Thyroid gland (tissue), 4 donors: ENCODE measurements at regions of chr17 and their contacts with region 1.

Region 1: GRCh38 chr17:74792586-74793105 is 16.5 kb upstream of the NAT9 start:
- DNase-seq: no peak
- H3K4me3 ChIP-seq: no peak overlapping the region
- H3K27ac ChIP-seq: no peak overlapping the region
- H3K4me1 ChIP-seq: peaks cover 19 to 42% of the 10 kb centered on the region in 2 donors
- H3K27me3 ChIP-seq: no peaks in the 10 kb centered on the region
- CTCF ChIP-seq: no peak
- POLR2A ChIP-seq: no peak

Region 2: DNA sequence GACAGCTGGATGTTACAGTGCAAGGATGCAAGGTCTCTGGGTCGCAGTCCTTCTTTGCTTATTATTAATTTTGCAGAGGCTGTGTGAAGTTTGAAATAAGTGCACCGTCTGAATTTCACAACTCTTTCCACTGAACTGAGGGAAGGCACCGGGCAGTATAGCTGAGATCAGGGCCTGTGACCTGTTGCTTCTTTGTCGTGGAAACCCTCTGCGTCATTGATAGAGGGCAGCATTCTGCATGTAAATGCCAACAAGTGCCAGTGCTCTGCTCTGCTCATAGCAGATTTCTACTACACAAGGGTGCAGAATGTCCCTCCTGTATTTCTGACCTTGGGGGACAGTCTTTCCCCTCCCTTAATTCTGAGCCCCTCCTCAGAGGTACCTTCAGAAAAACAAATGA is 105.9 kb before region 1 on chr17:
- intact Hi-C with region 1: no loop called
- DNase-seq: no peak
- H3K4me3 ChIP-seq: no peak overlapping the region
- H3K27ac ChIP-seq: no peak overlapping the region
- H3K4me1 ChIP-seq: no peaks in the 10 kb centered on the region
- H3K27me3 ChIP-seq: no peaks in the 10 kb centered on the region
- CTCF ChIP-seq: no peak
- POLR2A ChIP-seq: no peak

Region 3: GRCh38 chr17:74864866-74865395 is 72.3 kb after region 1 on chr17:
- intact Hi-C with region 1: loop called (anchors 2 kb)
- DNase-seq: peak; percentile 76 to 77
- H3K4me3 ChIP-seq: no peak overlapping the region
- H3K27ac ChIP-seq: no peak overlapping the region
- H3K4me1 ChIP-seq: peaks cover 16 to 23% of the 10 kb centered on the region in 2 donors
- H3K27me3 ChIP-seq: peaks cover 3% of the 10 kb centered on the region
- CTCF ChIP-seq: peak; percentile 85 to 98 (median 95)
- POLR2A ChIP-seq: no peak

Region 4: DNA sequence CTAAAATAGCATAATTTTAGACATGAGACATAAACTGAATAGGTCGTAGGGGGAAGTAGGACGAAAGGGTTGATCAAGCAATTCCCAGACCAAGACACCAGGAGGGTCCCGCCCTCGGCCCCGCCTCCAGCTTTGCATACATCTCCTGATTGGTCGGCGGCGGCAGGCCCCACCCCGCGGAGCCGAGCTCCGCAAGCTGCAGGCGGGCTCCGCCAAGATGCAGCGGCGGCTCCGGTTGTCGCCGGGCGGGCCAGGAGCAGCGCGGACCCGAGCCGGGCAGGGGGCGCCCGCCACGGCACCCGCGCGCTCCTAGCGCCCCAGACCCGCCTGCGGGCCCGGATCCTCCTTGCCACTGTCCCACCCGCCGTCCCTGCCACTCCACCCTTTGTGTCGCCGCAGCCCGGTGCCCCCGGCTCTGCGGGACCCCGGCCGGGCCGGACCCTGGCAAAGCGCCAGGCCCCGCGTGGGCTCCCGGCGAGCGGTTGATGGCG is 194.8 kb after region 1 on chr17 and contains the start of gene CDR2L:
- intact Hi-C with region 1: no loop called
- DNase-seq: peak; percentile 98 to 99
- H3K4me3 ChIP-seq: peak within 1 kb of the TSS in 2 of 3 donors; percentile 27 to 83
- H3K27ac ChIP-seq: peak within 1 kb of the TSS; percentile 82 to 86 (median 82)
- H3K4me1 ChIP-seq: peaks cover 9 to 26% of the 10 kb centered on the region in 2 donors
- H3K27me3 ChIP-seq: no peaks in the 10 kb centered on the region
- CTCF ChIP-seq: peak in 1 of 6 experiments; percentile 3
- POLR2A ChIP-seq: peak in 1 of 2 donors; percentile 91
- total RNA-seq, gene CDR2L: 2.6 to 9.8 (median 4.2) TPM